ENCODE measurements at regions of chr3 and their contacts with region 1.

Region 1: GRCh38 chr3:45995236-45996192 is at the start of gene FYCO1:
- DNase-seq: peak; percentile 59
- ATAC-seq: peak; percentile 94
- H3K4me3 ChIP-seq: peak within 1 kb of the TSS; percentile 79
- H3K27ac ChIP-seq: peak within 1 kb of the TSS; percentile 90
- H3K4me1 ChIP-seq: peaks cover 30% of the 10 kb centered on the region
- H3K27me3 ChIP-seq: no peaks in the 10 kb centered on the region
- CTCF ChIP-seq: no peak
- EP300 ChIP-seq: peak in 1 of 2 experiments; percentile 34; a peak in 1 of 4 replicates
- POLR2A ChIP-seq: peak; percentile 88
- RAD21 ChIP-seq: no peak
- polyA plus RNA-seq, gene FYCO1: 1.5 to 2.2 TPM

Region 2: GRCh38 chr3:45958321-45958791 is 37.2 kb before region 1 on chr3:
- CTCF ChIA-PET with region 1: interaction called, 7 read pairs
- POLR2A ChIA-PET with region 1: interaction called, 16 read pairs
- RAD21 ChIA-PET with region 1: interaction called, 32 read pairs
- SMC1A ChIA-PET with region 1: interaction called, 35 read pairs
- in situ Hi-C with region 1: no loop called
- intact Hi-C with region 1: no loop called
- DNase-seq: no peak
- ATAC-seq: no peak
- H3K4me3 ChIP-seq: no peak overlapping the region
- H3K27ac ChIP-seq: no peak overlapping the region
- H3K4me1 ChIP-seq: peaks cover 19% of the 10 kb centered on the region
- H3K27me3 ChIP-seq: no peaks in the 10 kb centered on the region
- CTCF ChIP-seq: no peak
- EP300 ChIP-seq: no peak
- POLR2A ChIP-seq: no peak
- RAD21 ChIP-seq: no peak

Region 3: DNA sequence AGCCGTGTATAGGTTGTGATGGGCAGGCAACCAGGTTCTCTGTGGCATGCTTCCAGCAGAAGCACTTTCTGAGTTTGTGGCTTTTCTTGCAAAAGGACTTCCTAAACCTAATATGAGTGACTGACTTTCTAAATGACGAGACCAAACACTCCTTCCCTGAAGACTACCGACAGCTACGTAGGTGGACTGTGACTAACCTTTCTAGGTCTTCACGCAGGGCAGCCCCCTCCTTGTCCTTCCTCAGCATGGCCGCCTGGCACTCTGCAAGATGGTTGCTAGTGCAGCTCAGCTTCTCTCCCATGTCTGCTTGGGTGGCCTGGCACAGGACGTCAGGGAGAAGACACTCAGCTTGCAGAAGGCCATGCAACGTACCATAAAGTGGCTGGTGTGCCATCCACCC is 31.4 kb before region 1 on chr3:
- CTCF ChIA-PET with region 1: interaction called, 7 read pairs
- POLR2A ChIA-PET with region 1: interaction called, 16 read pairs
- RAD21 ChIA-PET with region 1: interaction called, 32 read pairs
- SMC1A ChIA-PET with region 1: interaction called, 35 read pairs
- in situ Hi-C with region 1: no loop called
- intact Hi-C with region 1: no loop called
- DNase-seq: peak; percentile 31
- ATAC-seq: peak; percentile 75
- H3K4me3 ChIP-seq: no peak overlapping the region
- H3K27ac ChIP-seq: no peak overlapping the region
- H3K4me1 ChIP-seq: peaks cover 48% of the 10 kb centered on the region
- H3K27me3 ChIP-seq: no peaks in the 10 kb centered on the region
- CTCF ChIP-seq: no peak
- EP300 ChIP-seq: peak in 1 of 2 experiments; percentile 26; a peak in 1 of 4 replicates
- POLR2A ChIP-seq: no peak
- RAD21 ChIP-seq: no peak

Region 4: DNA sequence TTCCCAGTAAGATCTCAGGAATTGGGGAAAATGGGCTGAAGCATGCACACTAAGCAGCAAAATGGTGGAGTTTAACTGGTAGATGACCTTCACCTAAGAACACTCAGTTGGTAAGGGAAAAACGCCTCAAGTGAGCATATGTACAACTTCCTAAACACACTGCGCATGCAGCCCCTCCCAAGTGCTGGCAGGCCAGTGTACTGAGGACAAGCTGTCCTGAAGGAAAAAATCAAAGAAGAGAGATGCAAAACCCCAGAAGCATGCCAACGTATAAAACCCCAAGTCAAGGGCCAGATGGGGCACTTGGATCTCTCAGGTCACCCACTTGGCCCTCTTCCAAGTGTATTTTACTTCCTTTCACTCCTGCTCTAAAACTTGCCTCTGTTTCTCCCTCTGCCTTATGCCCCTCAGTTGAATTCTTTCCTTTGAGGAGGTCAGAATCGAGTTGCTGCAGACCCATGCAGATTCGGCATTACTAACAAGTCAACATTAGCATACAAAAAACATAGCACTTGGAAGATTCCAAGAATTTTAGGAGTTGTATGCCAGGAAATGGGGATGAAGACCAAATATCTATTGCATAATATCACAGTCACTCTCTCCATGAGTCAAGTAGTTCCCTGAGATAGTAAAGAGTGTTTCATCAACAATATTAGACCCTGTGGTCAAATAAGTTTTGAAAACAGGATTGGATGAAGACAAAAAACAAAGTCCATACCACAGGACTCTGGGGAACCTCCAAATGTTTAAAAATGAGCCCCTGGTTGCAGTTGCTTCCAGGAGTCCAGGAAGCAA is 10.9 kb after region 1 on chr3:
- CTCF ChIA-PET with region 1: no interaction called
- POLR2A ChIA-PET with region 1: no interaction called
- RAD21 ChIA-PET with region 1: no interaction called
- SMC1A ChIA-PET with region 1: interaction called, 10 read pairs
- in situ Hi-C with region 1: no loop called
- intact Hi-C with region 1: no loop called
- DNase-seq: no peak
- ATAC-seq: no peak
- H3K4me3 ChIP-seq: no peak overlapping the region
- H3K27ac ChIP-seq: no peak overlapping the region
- H3K4me1 ChIP-seq: peaks cover 3% of the 10 kb centered on the region
- H3K27me3 ChIP-seq: no peaks in the 10 kb centered on the region
- CTCF ChIP-seq: no peak
- EP300 ChIP-seq: no peak
- POLR2A ChIP-seq: no peak
- RAD21 ChIP-seq: no peak

Region 5: DNA sequence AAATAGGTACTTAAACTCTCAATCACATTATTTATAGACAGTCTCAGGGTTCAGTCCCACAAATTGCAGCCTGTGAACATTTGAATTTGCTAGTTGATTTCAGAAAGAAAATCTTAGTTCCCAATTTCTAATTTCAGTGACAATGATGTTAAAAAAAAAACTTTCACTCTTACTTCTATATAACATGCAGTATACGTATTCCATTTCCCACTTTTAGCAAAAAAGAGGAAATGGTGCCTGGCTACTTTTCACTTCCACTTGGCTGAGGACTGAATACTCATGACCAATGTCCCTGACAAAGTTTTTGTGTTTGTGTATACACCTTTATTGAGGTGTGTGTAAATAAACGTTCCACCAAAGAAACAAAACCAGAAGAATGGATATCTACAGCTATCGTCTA is 63.9 kb after region 1 on chr3:
- CTCF ChIA-PET with region 1: no interaction called
- POLR2A ChIA-PET with region 1: no interaction called
- RAD21 ChIA-PET with region 1: no interaction called
- SMC1A ChIA-PET with region 1: interaction called, 19 read pairs
- in situ Hi-C with region 1: no loop called
- intact Hi-C with region 1: no loop called
- DNase-seq: peak; percentile 38
- ATAC-seq: peak; percentile 91
- H3K4me3 ChIP-seq: 0 out of 2 replicates have a peak overlapping the region, but pooled peaks have one; percentile 25
- H3K27ac ChIP-seq: peak overlapping the region; percentile 51
- H3K4me1 ChIP-seq: peaks cover 29% of the 10 kb centered on the region
- H3K27me3 ChIP-seq: no peaks in the 10 kb centered on the region
- CTCF ChIP-seq: no peak
- EP300 ChIP-seq: peak; percentile 71 to 85; a peak in 3 of 4 replicates
- POLR2A ChIP-seq: no peak
- RAD21 ChIP-seq: no peak

Region 6: DNA sequence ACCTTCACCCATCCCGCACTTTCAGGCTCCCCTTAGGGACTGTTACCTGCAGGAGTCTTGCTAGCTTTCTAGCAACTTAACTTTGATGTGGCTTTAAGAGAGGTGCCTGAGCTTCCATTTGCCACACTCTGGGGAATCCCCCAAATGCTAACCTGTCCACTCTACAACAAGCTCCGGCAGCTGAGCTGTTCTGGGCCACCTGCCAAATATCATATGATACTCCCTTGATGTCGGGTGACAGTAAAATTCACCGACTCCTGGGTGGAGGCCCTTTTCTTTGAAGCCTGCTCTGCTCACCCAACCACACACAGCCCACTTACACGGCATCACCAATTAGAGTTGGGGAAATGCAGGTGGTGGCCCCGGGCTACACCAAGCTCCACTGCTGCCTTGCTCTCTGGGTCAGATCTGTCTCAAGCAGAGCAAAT is 69.8 kb after region 1 on chr3:
- CTCF ChIA-PET with region 1: no interaction called
- POLR2A ChIA-PET with region 1: interaction called, 7 read pairs
- RAD21 ChIA-PET with region 1: interaction called, 4 read pairs
- SMC1A ChIA-PET with region 1: interaction called, 19 read pairs
- in situ Hi-C with region 1: no loop called
- intact Hi-C with region 1: no loop called
- DNase-seq: peak; percentile 56
- ATAC-seq: peak; percentile 96
- H3K4me3 ChIP-seq: no peak overlapping the region
- H3K27ac ChIP-seq: no peak overlapping the region
- H3K4me1 ChIP-seq: peaks cover 19% of the 10 kb centered on the region
- H3K27me3 ChIP-seq: no peaks in the 10 kb centered on the region
- CTCF ChIP-seq: no peak
- EP300 ChIP-seq: peak in 1 of 2 experiments; percentile 59; a peak in 2 of 4 replicates
- POLR2A ChIP-seq: no peak
- RAD21 ChIP-seq: peak; percentile 0; the same call in 1 of the 2 replicates

Region 7: GRCh38 chr3:46214751-46215352 is 219.3 kb after region 1 on chr3:
- CTCF ChIA-PET with region 1: no interaction called
- POLR2A ChIA-PET with region 1: no interaction called
- RAD21 ChIA-PET with region 1: no interaction called
- SMC1A ChIA-PET with region 1: no interaction called
- in situ Hi-C with region 1: no loop called
- intact Hi-C with region 1: no loop called
- DNase-seq: no peak
- ATAC-seq: peak; percentile 85
- H3K4me3 ChIP-seq: no peak overlapping the region
- H3K27ac ChIP-seq: no peak overlapping the region
- H3K4me1 ChIP-seq: peaks cover 31% of the 10 kb centered on the region
- H3K27me3 ChIP-seq: peaks cover 0 to 5% of the 10 kb centered on the region in 2 experiments; a peak in 1 of 4 replicates
- CTCF ChIP-seq: peak; percentile 44 to 64 (median 61); a peak in 5 of 6 replicates
- EP300 ChIP-seq: no peak
- POLR2A ChIP-seq: no peak
- RAD21 ChIP-seq: peak; percentile 69